ENCODE measurements at regions of chr10 and their contacts with region 1.

Region 1: DNA sequence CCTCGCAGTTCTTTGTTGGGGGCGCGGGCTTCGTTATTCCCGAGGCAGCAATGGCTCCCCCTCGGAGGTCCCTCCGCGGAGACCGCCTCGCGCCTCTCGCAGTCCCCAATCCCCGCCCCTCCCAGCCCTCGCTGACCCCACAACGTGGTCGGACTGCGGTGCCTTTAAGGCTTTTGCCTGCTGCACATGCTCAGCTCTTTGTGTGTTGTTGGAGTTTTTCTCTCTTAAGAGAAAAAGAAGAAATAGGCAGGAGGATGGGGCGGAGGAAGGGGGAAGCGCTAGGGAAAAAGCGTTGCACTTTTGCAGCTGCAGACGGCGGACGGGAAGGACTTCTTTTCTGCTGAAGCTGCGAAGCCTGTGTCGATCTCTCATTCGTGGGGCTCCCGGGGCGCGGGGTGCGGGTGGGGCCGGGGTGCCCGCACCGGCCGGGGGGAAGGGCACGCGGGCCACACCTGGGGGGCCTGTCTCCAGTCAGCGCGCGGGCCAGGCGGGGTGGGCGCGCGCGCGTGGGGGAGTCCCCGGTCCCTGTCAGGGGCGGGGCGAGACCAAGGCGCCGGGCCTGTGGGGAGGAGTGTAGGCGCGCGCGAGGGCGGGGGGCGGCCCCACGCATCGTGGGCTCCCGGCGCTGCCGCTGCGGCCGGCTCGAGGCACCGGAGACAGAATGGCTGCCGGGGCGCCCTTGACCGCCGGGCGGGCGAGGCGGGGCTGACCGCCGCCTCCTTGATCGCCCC is 445 bp upstream of the ATRNL1 start:
- DNase-seq: peak; percentile 31 to 48
- H3K4me3 ChIP-seq: peak overlapping the region; percentile 41
- H3K4me1 ChIP-seq: peaks cover 10% of the 10 kb centered on the region
- H3K27me3 ChIP-seq: peaks cover 66% of the 10 kb centered on the region

Region 2: GRCh38 chr10:114584419-114584818 is 508.3 kb before region 1 on chr10:
- in situ Hi-C with region 1: no loop called
- DNase-seq: no peak
- H3K4me3 ChIP-seq: no peak overlapping the region
- H3K4me1 ChIP-seq: 0 out of 2 replicates have a peak, but pooled peaks cover 2% of the 10 kb centered on the region
- H3K27me3 ChIP-seq: no peaks in the 10 kb centered on the region; the same call in 1 of the 2 replicates

Region 3: DNA sequence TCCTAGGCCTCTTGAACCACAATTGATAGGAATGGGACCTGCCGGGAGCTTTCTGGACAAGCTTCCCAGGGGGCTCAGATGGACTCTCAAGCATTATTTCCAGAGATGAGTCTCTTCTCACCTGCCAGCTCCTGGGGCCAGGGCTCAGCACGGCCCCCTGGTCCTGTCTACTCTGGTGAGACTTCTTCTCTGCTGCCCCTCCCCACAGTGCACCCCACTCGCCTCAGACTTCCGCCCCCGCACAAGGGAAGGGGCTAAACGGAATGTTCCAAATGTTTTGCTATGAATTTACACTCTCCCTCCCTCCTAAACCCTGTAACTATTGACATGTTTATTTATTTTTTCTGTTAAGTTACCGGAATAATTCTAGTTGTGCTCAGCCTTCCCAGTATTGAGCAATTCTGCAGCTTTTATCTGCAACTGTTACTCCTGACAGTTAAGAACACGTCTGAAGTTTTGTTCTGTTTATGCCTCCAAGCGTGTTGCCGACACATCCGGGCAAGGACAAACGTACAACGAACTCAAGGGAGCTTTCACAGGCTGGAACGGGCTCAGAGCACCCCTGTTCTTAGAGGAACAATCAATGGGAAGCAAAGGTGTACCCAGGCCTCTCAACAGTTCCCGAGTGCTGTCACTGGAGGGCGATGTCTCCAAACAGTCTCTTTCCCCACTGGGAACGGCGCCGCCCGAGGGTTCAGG is 216.0 kb before region 1 on chr10:
- in situ Hi-C with region 1: loop called (anchors 25 kb)
- DNase-seq: peak; percentile 68 to 88
- H3K4me3 ChIP-seq: no peak overlapping the region
- H3K4me1 ChIP-seq: peaks cover 4% of the 10 kb centered on the region
- H3K27me3 ChIP-seq: no peaks in the 10 kb centered on the region; the same call in 1 of the 2 replicates

Region 4: DNA sequence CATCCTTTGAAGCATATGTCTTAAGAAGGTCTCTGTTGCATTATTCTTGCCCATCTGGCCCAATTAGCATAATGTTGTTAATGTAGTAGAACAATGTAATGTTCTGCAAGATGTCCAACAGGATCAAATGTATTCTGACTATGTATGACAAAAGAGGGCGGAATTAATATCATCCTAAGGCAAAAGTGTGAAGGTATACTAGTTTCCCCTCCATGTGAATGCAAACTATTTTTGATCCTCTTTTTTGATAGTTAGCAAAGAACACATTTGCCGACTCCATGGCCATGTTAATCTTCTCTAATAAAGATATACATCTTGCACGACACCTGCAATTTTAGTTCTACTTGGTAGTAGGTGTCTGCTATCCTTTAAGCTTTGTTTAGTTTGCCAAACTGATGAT is 158.1 kb after region 1 on chr10:
- in situ Hi-C with region 1: no loop called
- DNase-seq: no peak
- H3K4me3 ChIP-seq: no peak overlapping the region
- H3K4me1 ChIP-seq: no peaks in the 10 kb centered on the region
- H3K27me3 ChIP-seq: peaks cover 2% of the 10 kb centered on the region; the same call in 1 of the 2 replicates

Measured in HAP-1 (cell line).